ENCODE measurements at regions of chr19 and their contacts with region 1.

Region 1: DNA sequence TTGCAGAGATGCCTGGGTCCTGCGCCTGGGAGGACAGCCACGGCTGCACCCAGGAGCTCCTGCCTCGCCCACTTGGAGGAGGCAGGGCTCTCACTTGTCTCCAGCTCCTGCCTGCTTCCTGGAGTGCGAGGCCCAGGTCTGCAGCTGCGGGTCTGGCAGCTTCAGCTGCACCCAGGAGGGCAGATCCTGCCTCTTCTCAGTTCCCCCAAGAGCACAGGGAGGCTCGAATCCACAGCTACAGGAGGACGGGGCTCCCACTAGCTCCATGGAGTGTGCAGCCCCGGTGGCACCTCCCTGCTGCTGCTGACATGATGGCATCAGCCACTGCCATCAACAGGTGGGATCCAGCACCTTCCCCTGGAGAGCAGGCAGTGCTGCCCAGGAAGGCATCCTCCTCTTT is 4.5 kb downstream of the ZNF554 start:
- DNase-seq: no peak
- H3K4me3 ChIP-seq: no peak overlapping the region
- H3K27ac ChIP-seq: no peak overlapping the region
- H3K4me1 ChIP-seq: peaks cover 0 to 8% (median 4%) of the 10 kb centered on the region in 4 experiments
- H3K27me3 ChIP-seq: no peaks in the 10 kb centered on the region

Region 2: DNA sequence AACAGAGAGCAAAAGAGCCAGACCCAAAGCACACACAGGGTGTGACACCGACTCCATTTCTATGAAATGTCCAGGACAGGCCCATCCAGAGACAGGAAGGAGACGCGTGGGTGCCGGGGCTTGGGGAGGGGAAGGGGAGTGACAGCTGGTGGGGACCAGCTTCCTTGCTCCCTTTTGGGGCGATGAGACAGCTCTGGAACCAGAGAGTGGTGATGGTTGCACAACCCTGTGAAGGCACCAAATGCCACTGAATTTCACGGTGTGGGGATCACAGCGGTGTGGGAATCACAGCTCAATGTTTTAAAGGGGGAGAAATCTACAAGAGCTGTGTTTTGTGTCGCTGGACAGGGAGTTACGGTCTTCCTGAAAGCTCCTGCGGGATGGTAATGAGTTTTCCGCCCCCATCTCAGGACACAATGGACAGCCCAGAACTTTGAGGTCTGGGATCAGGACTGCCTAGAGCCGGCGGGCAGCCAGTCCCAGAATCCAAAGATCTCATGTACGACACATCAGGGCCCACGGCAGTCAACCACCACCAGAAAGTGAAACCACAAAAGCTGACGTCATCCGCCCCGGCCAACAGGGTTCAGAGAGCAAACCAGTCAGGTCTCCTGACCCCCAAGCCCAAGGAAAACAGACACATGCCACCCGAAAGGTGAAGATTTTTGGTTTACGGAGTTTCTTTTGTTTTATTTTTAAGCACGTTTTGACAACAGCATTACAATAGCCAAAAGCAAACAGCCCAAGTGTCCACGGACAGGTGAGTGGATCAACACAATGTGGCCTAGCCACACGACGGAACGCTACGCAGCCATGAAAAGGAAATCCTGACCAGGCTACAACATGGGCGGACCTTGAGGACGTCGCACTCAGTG is 48.3 kb before region 1 on chr19:
- CTCF ChIA-PET with region 1: no interaction called
- POLR2A ChIA-PET with region 1: no interaction called
- DNase-seq: peak; percentile 65 to 85 (median 80)
- H3K4me3 ChIP-seq: peak overlapping the region in 5 of 7 experiments; percentile 13 to 67 (median 54)
- H3K27ac ChIP-seq: peak overlapping the region; percentile 48 to 83
- H3K4me1 ChIP-seq: peaks cover 0 to 35% (median 31%) of the 10 kb centered on the region in 4 experiments
- H3K27me3 ChIP-seq: no peaks in the 10 kb centered on the region

Region 3: GRCh38 chr19:2834215-2834871 is 10.2 kb after region 1 on chr19:
- CTCF ChIA-PET with region 1: interaction called, 12 read pairs
- POLR2A ChIA-PET with region 1: no interaction called
- DNase-seq: no peak
- H3K4me3 ChIP-seq: no peak overlapping the region
- H3K27ac ChIP-seq: no peak overlapping the region
- H3K4me1 ChIP-seq: no peaks in the 10 kb centered on the region
- H3K27me3 ChIP-seq: no peaks in the 10 kb centered on the region

Measured in common myeloid progenitor, CD34-positive (primary cell).